ENCODE measurements at regions of chr2 and their contacts with region 1.

Region 1: DNA sequence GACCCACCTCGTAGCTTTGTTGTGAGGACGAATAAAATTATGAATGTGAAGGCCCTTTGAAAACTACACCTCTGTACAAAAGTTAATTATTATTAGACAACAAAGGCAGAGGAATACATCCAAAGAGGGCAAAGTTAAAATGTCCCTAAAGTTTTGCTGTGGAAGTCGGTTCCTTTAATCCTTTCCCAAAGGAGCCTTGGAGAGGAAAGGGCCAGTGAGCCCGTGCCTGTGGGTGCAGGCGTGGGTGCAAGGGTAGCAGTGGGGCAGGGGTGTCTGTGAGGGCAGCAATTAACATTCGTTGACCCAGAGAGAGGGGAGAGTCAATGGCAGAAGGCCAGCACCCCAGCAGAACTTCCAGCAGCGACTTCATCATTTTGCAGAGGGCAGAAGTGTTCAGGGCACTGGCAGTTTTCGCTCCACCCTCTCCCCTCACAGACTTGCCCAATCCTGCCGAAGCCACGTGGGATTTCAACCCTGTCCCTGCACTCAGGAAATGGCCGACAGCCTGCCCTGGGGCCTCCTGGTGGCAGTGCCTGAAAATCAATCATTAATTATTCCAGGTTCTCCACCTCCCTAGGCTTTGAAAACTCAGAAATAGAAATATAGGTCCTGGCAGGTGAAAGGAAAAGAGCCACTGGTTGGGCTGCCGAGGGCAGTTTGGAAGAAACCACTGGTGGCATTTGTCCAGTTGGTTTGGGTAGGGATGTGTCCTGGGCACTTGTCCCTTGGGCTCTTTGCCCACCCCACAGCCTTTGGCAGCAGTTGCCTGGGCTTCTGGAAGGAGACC is 4.2 kb upstream of the PAX8 start:
- DNase-seq: peak; percentile 84 to 92
- H3K4me3 ChIP-seq: no peak overlapping the region
- H3K4me3 Mint-ChIP-seq: no peak overlapping the region
- H3K27ac Mint-ChIP-seq: peak overlapping the region; percentile 59
- H3K4me1 ChIP-seq: peaks cover 25% of the 10 kb centered on the region
- H3K4me1 Mint-ChIP-seq: peaks cover 25% of the 10 kb centered on the region
- H3K27me3 ChIP-seq: no peaks in the 10 kb centered on the region
- H3K27me3 Mint-ChIP-seq: no peaks in the 10 kb centered on the region
- CTCF ChIP-seq: peak; percentile 33 to 38

Region 2: DNA sequence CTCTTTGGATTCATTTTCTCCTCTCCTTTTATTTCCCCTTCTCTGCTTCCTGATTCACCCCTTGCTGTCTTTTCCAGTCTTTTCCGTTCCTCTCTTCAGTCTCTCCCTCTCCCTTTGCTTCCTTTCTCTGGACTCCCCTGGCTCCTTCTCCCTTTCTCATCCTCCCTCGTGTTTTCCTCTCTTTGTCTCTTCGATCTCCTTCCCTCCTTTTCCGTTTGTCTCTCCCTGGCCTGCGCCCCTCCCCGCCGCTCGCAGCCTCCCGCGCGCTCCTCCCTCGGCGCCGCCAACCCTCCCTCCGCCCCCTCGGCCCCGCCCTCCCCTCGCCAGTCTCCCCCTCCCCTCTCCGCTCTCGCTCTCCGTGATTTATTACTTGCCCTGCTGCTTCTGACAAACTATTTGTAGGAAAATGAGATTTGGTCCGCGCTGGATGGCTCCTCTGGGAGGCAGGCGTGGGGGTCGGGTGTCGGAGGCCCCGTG is 41.8 kb after region 1 on chr2:
- CTCF ChIA-PET with region 1: no interaction called
- POLR2A ChIA-PET with region 1: no interaction called
- intact Hi-C with region 1: loop called (anchors 2 kb)
- DNase-seq: peak; percentile 81 to 83
- H3K4me3 ChIP-seq: peak overlapping the region; percentile 60
- H3K4me3 Mint-ChIP-seq: peak overlapping the region; percentile 68
- H3K27ac Mint-ChIP-seq: peak overlapping the region; percentile 33
- H3K4me1 ChIP-seq: peaks cover 19% of the 10 kb centered on the region
- H3K4me1 Mint-ChIP-seq: peaks cover 42% of the 10 kb centered on the region
- H3K27me3 ChIP-seq: no peaks in the 10 kb centered on the region
- H3K27me3 Mint-ChIP-seq: no peaks in the 10 kb centered on the region
- CTCF ChIP-seq: no peak

Measured in Caco-2 (cell line).